GM12878 (cell line): ENCODE measurements at regions of chr19 and their contacts with region 1.

Region 1: GRCh38 chr19:38877781-38878574 is at the start of gene RINL:
- DNase-seq: no peak
- ATAC-seq: peak; percentile 97
- H3K4me3 ChIP-seq: peak within 1 kb of the TSS; percentile 73
- H3K27ac ChIP-seq: peak within 1 kb of the TSS; percentile 95
- H3K4me1 ChIP-seq: peaks cover 7% of the 10 kb centered on the region
- H3K27me3 ChIP-seq: no peaks in the 10 kb centered on the region
- CTCF ChIP-seq: no peak
- EP300 ChIP-seq: no peak
- POLR2A ChIP-seq: peak; percentile 82
- RAD21 ChIP-seq: no peak
- polyA plus RNA-seq, gene RINL: 14.5 to 16.3 TPM

Region 2: DNA sequence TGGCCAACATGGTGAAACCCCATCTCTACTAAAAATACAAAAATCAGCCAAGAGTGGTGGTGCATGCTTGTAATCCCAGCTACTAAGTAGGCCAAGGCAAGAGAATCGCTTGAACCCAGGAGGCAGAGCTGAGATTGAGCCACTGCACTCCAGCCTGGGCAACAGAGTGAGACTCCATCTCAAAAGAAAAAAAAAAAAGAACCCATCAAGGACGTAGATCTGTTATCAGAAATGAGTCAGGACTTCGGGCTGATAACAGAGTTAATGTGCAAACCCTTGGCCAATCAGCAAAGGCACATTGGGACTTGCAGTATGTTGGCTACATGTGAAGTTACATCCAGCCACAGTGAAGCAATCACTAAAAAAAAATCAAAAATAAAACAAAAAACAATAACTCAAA is 93.8 kb before region 1 on chr19:
- CTCF ChIA-PET with region 1: no interaction called
- POLR2A ChIA-PET with region 1: no interaction called
- RAD21 ChIA-PET with region 1: no interaction called
- SMC1A ChIA-PET with region 1: no interaction called
- in situ Hi-C with region 1: no loop called
- intact Hi-C with region 1: loop called (anchors 10 kb)
- DNase-seq: no peak
- ATAC-seq: no peak
- H3K4me3 ChIP-seq: no peak overlapping the region
- H3K27ac ChIP-seq: no peak overlapping the region
- H3K4me1 ChIP-seq: no peaks in the 10 kb centered on the region
- H3K27me3 ChIP-seq: no peaks in the 10 kb centered on the region; a peak in 2 of 4 replicates
- CTCF ChIP-seq: no peak
- EP300 ChIP-seq: no peak
- POLR2A ChIP-seq: no peak
- RAD21 ChIP-seq: no peak

Region 3: DNA sequence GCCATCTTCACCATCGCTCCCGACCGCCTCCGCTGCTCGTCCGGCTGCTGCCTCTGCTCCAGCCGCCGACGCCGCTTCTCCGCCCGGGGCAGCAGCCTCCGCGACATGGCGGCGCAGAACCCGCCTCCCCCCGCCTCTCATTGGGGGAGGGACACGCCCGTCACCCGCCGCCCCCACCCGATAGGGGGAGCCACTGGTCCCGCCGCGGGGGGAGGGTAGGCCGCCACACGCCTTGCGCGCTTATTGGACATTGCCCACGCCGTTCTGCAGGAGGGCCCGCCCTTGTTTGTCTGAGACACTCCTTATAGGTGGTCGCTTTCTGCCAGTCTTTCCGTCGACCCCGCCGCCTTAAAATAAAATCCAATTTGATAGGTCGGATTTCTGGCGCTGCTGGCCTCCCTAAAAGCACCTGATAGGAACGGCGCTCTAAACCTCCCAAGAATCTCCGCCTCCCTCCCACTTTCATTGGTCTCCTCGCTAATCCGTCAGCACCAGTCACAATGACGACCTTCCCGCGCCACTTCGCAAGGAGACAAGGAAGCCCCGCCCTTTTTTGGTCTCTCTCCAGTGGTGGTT is 28.0 kb before region 1 on chr19 and contains the start of gene HNRNPL:
- CTCF ChIA-PET with region 1: interaction called, 9 read pairs
- POLR2A ChIA-PET with region 1: interaction called, 12 read pairs
- RAD21 ChIA-PET with region 1: interaction called, 7 read pairs
- SMC1A ChIA-PET with region 1: interaction called, 4 read pairs
- in situ Hi-C with region 1: no loop called
- intact Hi-C with region 1: no loop called
- DNase-seq: peak; percentile 100
- ATAC-seq: peak; percentile 76
- H3K4me3 ChIP-seq: peak within 1 kb of the TSS; percentile 79
- H3K27ac ChIP-seq: peak within 1 kb of the TSS; percentile 96
- H3K4me1 ChIP-seq: peaks cover 10% of the 10 kb centered on the region
- H3K27me3 ChIP-seq: no peaks in the 10 kb centered on the region
- CTCF ChIP-seq: peak; percentile 28 to 42 (median 33); a peak in 4 of 6 replicates
- EP300 ChIP-seq: 0 out of 4 replicates have a peak, but pooled peaks of 1 of the 2 experiments have one; percentile 10
- POLR2A ChIP-seq: peak; percentile 90
- RAD21 ChIP-seq: no peak
- polyA plus RNA-seq, gene HNRNPL: 32.5 to 92.5 TPM

Region 4: DNA sequence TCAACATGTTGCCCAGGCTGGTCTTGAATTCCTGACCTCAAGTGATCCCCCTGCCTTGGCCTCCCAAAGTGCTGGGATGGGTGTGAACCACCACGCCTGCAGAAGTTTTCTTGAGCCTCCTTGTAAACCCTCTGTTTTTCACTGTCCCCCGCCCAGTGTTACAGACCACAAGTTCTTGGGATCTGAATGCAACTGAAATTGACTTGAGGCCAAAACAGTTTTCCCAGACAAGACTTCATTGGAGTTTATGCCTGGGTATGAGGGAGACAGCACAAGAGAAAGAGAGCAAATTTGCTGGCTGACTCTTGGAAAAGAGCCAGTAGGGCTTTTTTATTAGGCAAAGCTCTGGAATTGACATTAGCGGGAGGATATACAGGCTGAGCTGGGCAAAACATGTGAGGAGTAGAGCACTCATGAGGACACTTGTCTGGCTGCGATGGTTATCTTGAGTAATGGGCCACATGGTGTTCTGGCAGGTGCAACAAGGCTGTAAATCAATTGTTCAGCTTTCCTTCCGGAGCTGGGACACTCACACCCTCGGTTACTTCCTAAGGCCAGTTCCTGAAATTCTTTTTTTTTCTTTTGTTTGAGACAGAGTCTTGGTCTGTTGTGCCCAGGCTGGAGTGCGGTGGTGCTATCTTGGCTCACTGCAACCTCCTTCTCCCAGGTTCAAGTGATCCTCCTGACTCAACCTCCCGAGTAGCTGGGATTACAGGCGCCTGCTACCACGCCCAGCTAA is 15.5 kb before region 1 on chr19:
- CTCF ChIA-PET with region 1: interaction called, 5 read pairs
- POLR2A ChIA-PET with region 1: interaction called, 10 read pairs
- RAD21 ChIA-PET with region 1: interaction called, 6 read pairs
- SMC1A ChIA-PET with region 1: interaction called, 7 read pairs
- in situ Hi-C with region 1: no loop called
- intact Hi-C with region 1: no loop called
- DNase-seq: no peak
- ATAC-seq: no peak
- H3K4me3 ChIP-seq: no peak overlapping the region
- H3K27ac ChIP-seq: no peak overlapping the region
- H3K4me1 ChIP-seq: peaks cover 37% of the 10 kb centered on the region
- H3K27me3 ChIP-seq: no peaks in the 10 kb centered on the region
- CTCF ChIP-seq: no peak
- EP300 ChIP-seq: no peak
- POLR2A ChIP-seq: no peak
- RAD21 ChIP-seq: no peak

Region 5: DNA sequence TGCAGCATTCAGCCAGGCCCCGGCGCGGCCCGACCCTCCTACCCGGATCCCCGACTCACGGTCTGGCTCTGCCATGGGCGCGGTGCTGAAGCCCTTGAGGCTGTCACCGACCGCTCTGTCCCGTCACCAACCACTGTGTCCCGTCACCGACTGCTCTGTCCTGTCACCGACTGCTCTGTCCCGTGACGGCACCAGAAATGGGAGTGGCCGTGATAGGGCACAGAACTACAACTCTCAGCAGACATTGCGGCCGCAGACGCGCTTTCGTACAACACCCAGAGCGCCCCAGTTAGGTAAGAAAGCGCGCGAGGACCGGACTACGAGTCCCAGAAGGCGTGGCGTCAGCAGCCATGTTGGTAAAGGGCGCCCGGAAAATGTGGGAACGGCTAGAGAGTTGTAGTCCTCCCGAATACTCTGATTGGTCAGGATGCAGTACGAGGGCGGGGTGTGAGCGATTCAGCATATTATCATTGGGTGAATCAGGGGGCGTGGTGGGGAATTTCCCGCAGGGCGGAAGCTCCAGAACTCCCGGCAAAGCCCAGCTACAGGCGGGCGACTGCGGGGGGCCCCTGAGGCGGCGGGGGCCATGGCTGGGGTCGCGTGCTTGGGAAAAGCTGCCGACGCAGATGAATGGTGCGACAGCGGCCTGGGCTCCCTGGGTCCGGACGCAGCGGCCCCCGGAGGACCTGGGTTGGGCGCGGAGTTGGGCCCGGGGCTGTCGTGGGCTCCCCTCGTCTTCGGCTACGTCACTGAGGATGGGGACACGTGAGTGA is 21.7 kb after region 1 on chr19 and contains the starts of genes NFKBIB and SIRT2:
- CTCF ChIA-PET with region 1: interaction called, 5 read pairs
- POLR2A ChIA-PET with region 1: interaction called, 5 read pairs
- RAD21 ChIA-PET with region 1: interaction called, 3 read pairs
- SMC1A ChIA-PET with region 1: interaction called, 6 read pairs
- in situ Hi-C with region 1: no loop called
- intact Hi-C with region 1: loop called (anchors 2 kb)
- DNase-seq: peak; percentile 99
- ATAC-seq: peak; percentile 96
- H3K4me3 ChIP-seq: peak within 1 kb of the TSS; percentile 90
- H3K27ac ChIP-seq: peak within 1 kb of the TSS; percentile 75
- H3K4me1 ChIP-seq: peaks cover 5% of the 10 kb centered on the region
- H3K27me3 ChIP-seq: no peaks in the 10 kb centered on the region
- CTCF ChIP-seq: no peak
- EP300 ChIP-seq: no peak
- POLR2A ChIP-seq: peak; percentile 79
- RAD21 ChIP-seq: no peak
- polyA plus RNA-seq, gene NFKBIB: 1.2 to 4.3 TPM
- polyA plus RNA-seq, gene SIRT2: 1.4 to 5.1 TPM

Region 6: GRCh38 chr19:38919837-38920601 is 42.0 kb after region 1 on chr19:
- CTCF ChIA-PET with region 1: no interaction called
- POLR2A ChIA-PET with region 1: no interaction called
- RAD21 ChIA-PET with region 1: no interaction called
- SMC1A ChIA-PET with region 1: no interaction called
- in situ Hi-C with region 1: no loop called
- intact Hi-C with region 1: no loop called
- DNase-seq: no peak
- ATAC-seq: no peak
- H3K4me3 ChIP-seq: no peak overlapping the region
- H3K27ac ChIP-seq: no peak overlapping the region
- H3K4me1 ChIP-seq: no peaks in the 10 kb centered on the region
- H3K27me3 ChIP-seq: no peaks in the 10 kb centered on the region
- CTCF ChIP-seq: no peak
- EP300 ChIP-seq: no peak
- POLR2A ChIP-seq: no peak
- RAD21 ChIP-seq: no peak